ENCODE measurements at regions of chr13 and their contacts with region 1.

Region 1: GRCh38 chr13:102555917-102556553 is 40.8 kb upstream of the TPP2 start:
- DNase-seq: no peak
- H3K4me3 Mint-ChIP-seq: no peak overlapping the region
- H3K27ac Mint-ChIP-seq: no peak overlapping the region
- H3K4me1 Mint-ChIP-seq: no peaks in the 10 kb centered on the region
- H3K27me3 Mint-ChIP-seq: peaks cover 4% of the 10 kb centered on the region

Region 2: GRCh38 chr13:101514788-101515187 is 1041.2 kb before region 1 on chr13:
- CTCF ChIA-PET with region 1: interaction called, 3 read pairs
- POLR2A ChIA-PET with region 1: no interaction called
- intact Hi-C with region 1: loop called (anchors 10 kb)
- DNase-seq: no peak
- H3K4me3 Mint-ChIP-seq: no peak overlapping the region
- H3K27ac Mint-ChIP-seq: no peak overlapping the region
- H3K4me1 Mint-ChIP-seq: peaks cover 12% of the 10 kb centered on the region
- H3K27me3 Mint-ChIP-seq: peaks cover 2% of the 10 kb centered on the region

Region 3: GRCh38 chr13:102141625-102142472 is 414.2 kb before region 1 on chr13:
- CTCF ChIA-PET with region 1: interaction called, 29 read pairs
- POLR2A ChIA-PET with region 1: no interaction called
- intact Hi-C with region 1: loop called (anchors 1 kb)
- DNase-seq: no peak
- H3K4me3 Mint-ChIP-seq: no peak overlapping the region
- H3K27ac Mint-ChIP-seq: no peak overlapping the region
- H3K4me1 Mint-ChIP-seq: no peaks in the 10 kb centered on the region
- H3K27me3 Mint-ChIP-seq: no peaks in the 10 kb centered on the region

Region 4: GRCh38 chr13:102402290-102402689 is 153.7 kb before region 1 on chr13:
- CTCF ChIA-PET with region 1: interaction called, 4 read pairs
- POLR2A ChIA-PET with region 1: no interaction called
- intact Hi-C with region 1: loop called (anchors 5 kb)
- DNase-seq: peak; percentile 61
- H3K4me3 Mint-ChIP-seq: peak overlapping the region; percentile 42
- H3K27ac Mint-ChIP-seq: no peak overlapping the region
- H3K4me1 Mint-ChIP-seq: peaks cover 26% of the 10 kb centered on the region
- H3K27me3 Mint-ChIP-seq: peaks cover 54% of the 10 kb centered on the region

Region 5: DNA sequence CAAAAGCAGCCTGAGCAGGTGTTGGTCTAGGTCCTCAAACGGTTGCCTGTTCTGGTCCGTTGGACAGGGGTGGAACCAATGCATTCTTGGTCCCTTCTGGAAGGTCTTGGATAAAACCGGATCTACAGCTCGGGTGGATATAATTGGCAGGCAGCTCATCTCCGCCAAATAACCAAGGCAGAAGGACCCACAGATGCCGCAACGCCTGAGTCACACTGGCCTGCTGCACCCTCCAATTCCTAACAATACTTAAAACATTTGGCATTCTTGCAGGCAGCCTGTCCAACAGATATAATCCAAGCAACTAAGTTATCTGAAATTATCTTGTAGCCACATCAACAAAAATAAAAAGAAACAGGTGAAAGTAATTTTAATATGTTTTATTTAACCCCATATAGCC is 95.2 kb before region 1 on chr13:
- CTCF ChIA-PET with region 1: interaction called, 7 read pairs
- POLR2A ChIA-PET with region 1: no interaction called
- intact Hi-C with region 1: loop called (anchors 2 kb)
- DNase-seq: no peak
- H3K4me3 Mint-ChIP-seq: no peak overlapping the region
- H3K27ac Mint-ChIP-seq: no peak overlapping the region
- H3K4me1 Mint-ChIP-seq: peaks cover 5% of the 10 kb centered on the region
- H3K27me3 Mint-ChIP-seq: peaks cover 11% of the 10 kb centered on the region

Region 6: GRCh38 chr13:102566513-102566912 is 10.5 kb after region 1 on chr13:
- CTCF ChIA-PET with region 1: interaction called, 13 read pairs
- POLR2A ChIA-PET with region 1: no interaction called
- intact Hi-C with region 1: no loop called
- DNase-seq: no peak
- H3K4me3 Mint-ChIP-seq: no peak overlapping the region
- H3K27ac Mint-ChIP-seq: no peak overlapping the region
- H3K4me1 Mint-ChIP-seq: no peaks in the 10 kb centered on the region
- H3K27me3 Mint-ChIP-seq: peaks cover 10% of the 10 kb centered on the region